ENCODE measurements at regions of chr9 and their contacts with region 1.

Region 1: DNA sequence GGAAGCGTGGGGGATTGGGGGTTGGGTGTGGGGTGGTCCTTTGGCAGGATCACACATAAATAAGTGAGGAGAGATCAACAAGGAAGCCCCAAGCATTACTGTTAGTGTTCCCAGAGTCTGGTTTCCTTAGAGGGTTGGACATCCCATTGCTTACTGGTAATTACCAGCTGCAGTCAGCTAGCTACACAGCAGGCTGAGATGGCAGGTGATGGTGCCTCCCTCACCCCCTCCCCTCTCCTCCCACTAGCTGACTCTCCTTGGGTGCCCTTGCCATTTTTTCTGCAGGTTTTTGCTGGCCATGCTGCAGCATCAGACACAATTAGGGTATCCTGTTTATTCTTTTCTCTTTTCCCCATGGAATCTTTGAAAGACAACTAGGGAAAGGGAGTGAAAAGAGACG is 107.5 kb upstream of the TLR4 start:
- DNase-seq: no peak
- ATAC-seq: no peak

Region 2: GRCh38 chr9:117278471-117279035 is 318.1 kb before region 1 on chr9:
- intact Hi-C with region 1: no loop called
- DNase-seq: no peak
- ATAC-seq: no peak

Region 3: GRCh38 chr9:117574099-117574498 is 22.6 kb before region 1 on chr9:
- intact Hi-C with region 1: loop called (anchors 1 kb)
- DNase-seq: no peak
- ATAC-seq: no peak

Measured in left ventricle myocardium superior (tissue), 1 donor.